ENCODE measurements at regions of chr1 and their contacts with region 1.

Region 1: DNA sequence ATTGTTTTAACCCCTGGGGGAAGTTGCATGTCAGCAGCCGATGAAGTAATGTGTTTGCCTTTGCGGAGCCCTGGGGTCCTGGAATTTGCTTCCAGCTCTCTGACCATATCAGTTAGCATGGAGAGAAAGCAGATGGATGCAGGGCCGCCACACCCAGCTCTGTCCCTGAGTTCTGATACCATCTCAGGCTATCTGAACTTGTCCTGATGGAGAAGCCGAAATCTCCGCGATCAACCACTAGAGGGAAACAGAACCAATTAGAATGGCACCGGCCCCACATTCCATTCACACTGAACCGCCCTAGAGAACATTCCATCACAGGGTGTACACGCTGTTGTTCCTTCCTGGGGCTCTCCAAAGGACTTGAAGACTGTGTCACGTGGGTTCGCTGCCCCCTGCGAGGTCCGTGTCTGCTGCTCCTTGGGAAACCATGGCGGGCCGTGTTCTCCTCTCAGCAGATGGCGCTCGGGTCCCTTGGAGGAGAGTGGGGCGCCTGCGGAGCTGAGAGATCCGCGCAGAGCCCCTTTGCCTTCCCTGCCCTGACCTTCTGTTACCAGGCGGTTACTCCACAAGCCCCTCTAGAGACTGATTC is 75.4 kb downstream of the ABCA4 start:
- DNase-seq: peak; percentile 96

Region 2: GRCh38 chr1:94025383-94026340 is 19.9 kb before region 1 on chr1:
- intact Hi-C with region 1: loop called in 1 of 2 experiments (anchors 2 kb)
- DNase-seq: no peak

Measured in posterior vena cava (tissue), 2 donors.